HepG2 (cell line): ENCODE measurements at regions of chr5 and their contacts with region 1.

Region 1: GRCh38 chr5:95961617-95962474 is at the start of gene ELL2:
- DNase-seq: peak; percentile 97
- ATAC-seq: peak; percentile 86
- H3K4me3 ChIP-seq: peak within 1 kb of the TSS; percentile 94 to 100 (median 99)
- H3K27ac ChIP-seq: peak within 1 kb of the TSS; percentile 89
- H3K4me1 ChIP-seq: peaks cover 60% of the 10 kb centered on the region
- H3K27me3 ChIP-seq: peaks cover 0 to 6% of the 10 kb centered on the region in 2 experiments; a peak in 1 of 5 replicates
- CTCF ChIP-seq: no peak
- EP300 ChIP-seq: peak in 1 of 2 experiments; percentile 6; a peak in 1 of 4 replicates
- POLR2A ChIP-seq: peak; percentile 64 to 85
- RAD21 ChIP-seq: no peak
- total RNA-seq, gene ELL2: 64.5 and 78.9 TPM in 2 replicates

Region 2: DNA sequence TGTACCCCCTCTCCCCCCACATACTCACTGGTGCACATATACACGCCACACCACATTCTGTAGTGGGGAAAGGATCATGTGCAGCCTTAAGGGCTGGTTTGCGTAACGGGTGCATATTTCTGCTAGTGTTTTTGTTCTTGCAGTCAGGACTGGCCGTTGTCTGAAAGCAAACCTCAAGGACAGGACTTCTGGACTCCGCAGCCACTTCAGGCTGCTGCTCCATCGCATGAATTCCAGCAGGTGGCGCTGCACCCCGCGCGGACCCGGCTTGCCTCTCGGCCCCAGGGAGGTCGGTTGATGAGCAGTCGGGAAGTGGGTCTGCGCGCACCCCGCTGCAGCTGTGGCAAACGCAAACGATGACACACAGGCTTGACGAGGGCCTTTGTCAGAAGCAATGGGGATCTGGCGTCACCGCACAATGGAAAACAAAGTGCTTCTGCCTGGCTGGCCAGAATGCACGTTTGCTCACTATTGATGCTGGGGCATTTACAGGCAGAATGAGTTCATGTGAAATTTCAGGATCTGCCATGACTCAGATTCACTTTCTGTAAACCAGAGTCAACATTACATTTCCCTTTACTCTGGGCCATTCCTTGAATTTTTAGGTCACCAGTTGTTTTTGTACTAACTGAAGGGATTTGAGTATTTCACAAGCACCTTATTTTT is 103.1 kb before region 1 on chr5:
- CTCF ChIA-PET with region 1: no interaction called
- POLR2A ChIA-PET with region 1: interaction called, 8 read pairs
- in situ Hi-C with region 1: loop called (anchors 5 kb)
- intact Hi-C with region 1: loop called (anchors 2 kb)
- DNase-seq: peak; percentile 90
- ATAC-seq: peak; percentile 75
- H3K4me3 ChIP-seq: peak overlapping the region; percentile 10 to 47 (median 32); a peak in 4 of 6 replicates
- H3K27ac ChIP-seq: peak overlapping the region; percentile 71
- H3K4me1 ChIP-seq: peaks cover 76% of the 10 kb centered on the region
- H3K27me3 ChIP-seq: no peaks in the 10 kb centered on the region
- CTCF ChIP-seq: peak; percentile 100
- EP300 ChIP-seq: peak in 1 of 2 experiments; percentile 63; a peak in 1 of 4 replicates
- POLR2A ChIP-seq: peak; percentile 28 to 51; a peak in 2 of 4 replicates
- RAD21 ChIP-seq: peak; percentile 99

Region 3: GRCh38 chr5:95984287-95984938 is 22.6 kb after region 1 on chr5:
- CTCF ChIA-PET with region 1: interaction called, 3 read pairs
- POLR2A ChIA-PET with region 1: interaction called, 125 read pairs
- in situ Hi-C with region 1: no loop called
- intact Hi-C with region 1: loop called (anchors 1 kb)
- DNase-seq: no peak
- ATAC-seq: no peak
- H3K4me3 ChIP-seq: no peak overlapping the region
- H3K27ac ChIP-seq: peak overlapping the region; percentile 40
- H3K4me1 ChIP-seq: peaks cover 67% of the 10 kb centered on the region
- H3K27me3 ChIP-seq: no peaks in the 10 kb centered on the region
- CTCF ChIP-seq: no peak
- EP300 ChIP-seq: no peak
- POLR2A ChIP-seq: no peak
- RAD21 ChIP-seq: no peak

Region 4: GRCh38 chr5:96049398-96050272 is 87.8 kb after region 1 on chr5:
- CTCF ChIA-PET with region 1: no interaction called
- POLR2A ChIA-PET with region 1: no interaction called
- in situ Hi-C with region 1: no loop called
- intact Hi-C with region 1: loop called (anchors 5 kb)
- DNase-seq: no peak
- ATAC-seq: no peak
- H3K4me3 ChIP-seq: no peak overlapping the region
- H3K27ac ChIP-seq: no peak overlapping the region
- H3K4me1 ChIP-seq: peaks cover 40% of the 10 kb centered on the region
- H3K27me3 ChIP-seq: no peaks in the 10 kb centered on the region
- CTCF ChIP-seq: no peak
- EP300 ChIP-seq: no peak
- POLR2A ChIP-seq: no peak
- RAD21 ChIP-seq: no peak

Region 5: DNA sequence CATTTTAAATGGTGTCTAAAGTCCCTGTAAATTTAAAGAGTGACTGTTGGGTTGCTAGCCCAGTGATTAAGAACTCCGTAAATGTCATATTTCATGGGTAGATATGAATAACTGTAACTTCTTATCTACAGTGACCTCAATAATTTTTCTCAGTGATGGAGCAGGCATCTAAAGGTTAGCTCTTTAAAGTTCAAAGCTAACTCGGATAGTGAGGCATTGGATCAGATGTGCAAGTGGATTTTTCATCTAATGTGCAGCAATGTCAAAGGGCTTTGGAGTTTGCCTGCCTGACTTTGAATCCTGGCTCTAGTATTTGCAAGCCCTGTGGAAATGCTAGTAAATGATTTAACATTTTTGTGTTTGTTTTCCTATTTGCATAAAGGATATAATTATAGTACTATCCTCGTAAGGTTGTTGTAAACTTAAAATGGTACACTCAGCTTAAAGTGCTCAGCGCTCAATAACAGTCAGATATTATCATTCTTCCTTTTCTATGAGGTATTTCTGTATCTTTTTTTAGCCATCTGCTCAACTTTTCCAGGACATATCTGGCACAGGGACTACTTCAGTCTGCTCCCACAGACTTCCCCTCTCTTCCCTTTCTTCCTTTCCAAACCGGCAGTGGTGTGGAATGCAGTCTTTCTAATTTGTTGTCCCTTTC is 163.5 kb after region 1 on chr5:
- CTCF ChIA-PET with region 1: no interaction called
- POLR2A ChIA-PET with region 1: interaction called, 3 read pairs
- in situ Hi-C with region 1: no loop called
- intact Hi-C with region 1: loop called (anchors 2 kb)
- DNase-seq: peak; percentile 92
- ATAC-seq: peak; percentile 92
- H3K4me3 ChIP-seq: peak overlapping the region; percentile 36 to 61 (median 44); a peak in 4 of 6 replicates
- H3K27ac ChIP-seq: peak overlapping the region; percentile 86
- H3K4me1 ChIP-seq: peaks cover 95% of the 10 kb centered on the region
- H3K27me3 ChIP-seq: no peaks in the 10 kb centered on the region
- CTCF ChIP-seq: no peak
- EP300 ChIP-seq: peak in 1 of 2 experiments; percentile 91; a peak in 2 of 4 replicates
- POLR2A ChIP-seq: peak in 1 of 2 experiments; percentile 43; a peak in 1 of 4 replicates
- RAD21 ChIP-seq: no peak

Region 6: GRCh38 chr5:96297290-96297689 is 335.4 kb after region 1 on chr5:
- CTCF ChIA-PET with region 1: no interaction called
- POLR2A ChIA-PET with region 1: no interaction called
- in situ Hi-C with region 1: no loop called
- intact Hi-C with region 1: loop called (anchors 5 kb)
- DNase-seq: peak; percentile 40
- ATAC-seq: peak; percentile 61
- H3K4me3 ChIP-seq: no peak overlapping the region
- H3K27ac ChIP-seq: peak overlapping the region; percentile 85
- H3K4me1 ChIP-seq: peaks cover 80% of the 10 kb centered on the region
- H3K27me3 ChIP-seq: no peaks in the 10 kb centered on the region
- CTCF ChIP-seq: no peak
- EP300 ChIP-seq: no peak
- POLR2A ChIP-seq: no peak
- RAD21 ChIP-seq: no peak